Heart left ventricle (tissue), 16 donors: ENCODE measurements at regions of chr1 and their contacts with region 1.

Region 1: GRCh38 chr1:209839875-209840491 is 12.2 kb downstream of the UTP25 start:
- DNase-seq: no peak
- ATAC-seq: peak in 2 of 4 donors; percentile 48 to 53
- H3K4me3 ChIP-seq: no peak overlapping the region
- H3K27ac ChIP-seq: peak overlapping the region in 2 of 12 donors; percentile 11 to 21
- H3K4me1 ChIP-seq: peaks cover 0 to 16% (median 0%) of the 10 kb centered on the region in 12 donors
- H3K27me3 ChIP-seq: no peaks in the 10 kb centered on the region
- CTCF ChIP-seq: no peak
- POLR2A ChIP-seq: no peak

Region 2: DNA sequence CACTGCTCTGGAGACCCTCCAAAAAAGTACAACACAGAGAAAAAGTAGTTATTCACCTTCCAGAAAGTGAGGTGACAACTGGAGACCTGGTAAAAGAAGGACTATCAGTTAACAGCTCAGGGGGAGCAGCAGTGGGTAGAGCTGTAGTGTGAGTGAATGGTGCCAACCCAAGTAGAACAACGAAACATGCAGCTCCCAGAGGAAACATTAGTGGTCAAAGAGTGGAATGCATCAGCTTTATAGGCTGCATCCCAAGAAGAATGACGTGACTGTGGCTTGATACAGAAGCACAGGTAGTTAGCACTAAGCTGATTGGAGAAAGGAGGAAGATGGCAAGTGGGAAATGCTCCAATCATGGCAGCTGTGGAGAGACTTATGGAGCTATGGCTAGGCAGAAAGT is 532.1 kb before region 1 on chr1:
- intact Hi-C with region 1: no loop called
- DNase-seq: no peak
- ATAC-seq: no peak
- H3K4me3 ChIP-seq: no peak overlapping the region
- H3K27ac ChIP-seq: no peak overlapping the region
- H3K4me1 ChIP-seq: no peaks in the 10 kb centered on the region
- H3K27me3 ChIP-seq: peaks cover 0 to 29% (median 3%) of the 10 kb centered on the region in 9 donors
- CTCF ChIP-seq: no peak
- POLR2A ChIP-seq: no peak

Region 3: DNA sequence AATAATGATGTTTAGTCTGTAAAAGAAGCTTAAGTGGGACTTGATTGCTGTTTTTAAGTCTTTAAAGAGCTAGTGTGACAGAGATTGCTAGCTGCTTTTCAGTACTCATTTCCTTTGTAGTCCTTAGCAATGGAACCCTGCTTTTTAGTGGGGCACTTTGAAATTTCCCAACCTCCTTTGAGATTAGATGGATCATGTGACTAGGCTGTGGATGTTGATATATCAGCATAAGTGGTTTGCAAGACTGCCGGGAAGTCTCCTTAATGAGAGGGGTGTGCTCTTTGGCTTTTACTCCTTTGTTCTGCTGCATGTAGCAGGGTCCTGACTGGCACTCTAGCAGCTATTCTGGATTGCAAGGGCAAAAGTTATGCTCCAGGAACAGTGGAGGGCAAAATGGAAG is 1407.9 kb after region 1 on chr1:
- intact Hi-C with region 1: loop called in 1 of 10 experiments (anchors 10 kb)
- DNase-seq: no peak
- ATAC-seq: no peak
- H3K4me3 ChIP-seq: no peak overlapping the region
- H3K27ac ChIP-seq: no peak overlapping the region
- H3K4me1 ChIP-seq: no peaks in the 10 kb centered on the region
- H3K27me3 ChIP-seq: no peaks in the 10 kb centered on the region
- CTCF ChIP-seq: no peak
- POLR2A ChIP-seq: no peak